ENCODE measurements at regions of chr14 and their contacts with region 1.

Region 1: GRCh38 chr14:22531451-22532344 is 57.3 kb downstream of the DAD1 start:
- DNase-seq: no peak
- H3K4me3 Mint-ChIP-seq: peak overlapping the region; percentile 81
- H3K27ac Mint-ChIP-seq: peak overlapping the region; percentile 94
- H3K4me1 Mint-ChIP-seq: peaks cover 82% of the 10 kb centered on the region
- H3K27me3 Mint-ChIP-seq: no peaks in the 10 kb centered on the region

Region 2: GRCh38 chr14:21723431-21724045 is 808.2 kb before region 1 on chr14:
- intact Hi-C with region 1: loop called (anchors 5 kb)
- DNase-seq: peak; percentile 79
- H3K4me3 Mint-ChIP-seq: peak overlapping the region; percentile 57
- H3K27ac Mint-ChIP-seq: peak overlapping the region; percentile 81
- H3K4me1 Mint-ChIP-seq: peaks cover 4% of the 10 kb centered on the region
- H3K27me3 Mint-ChIP-seq: peaks cover 48% of the 10 kb centered on the region

Region 3: DNA sequence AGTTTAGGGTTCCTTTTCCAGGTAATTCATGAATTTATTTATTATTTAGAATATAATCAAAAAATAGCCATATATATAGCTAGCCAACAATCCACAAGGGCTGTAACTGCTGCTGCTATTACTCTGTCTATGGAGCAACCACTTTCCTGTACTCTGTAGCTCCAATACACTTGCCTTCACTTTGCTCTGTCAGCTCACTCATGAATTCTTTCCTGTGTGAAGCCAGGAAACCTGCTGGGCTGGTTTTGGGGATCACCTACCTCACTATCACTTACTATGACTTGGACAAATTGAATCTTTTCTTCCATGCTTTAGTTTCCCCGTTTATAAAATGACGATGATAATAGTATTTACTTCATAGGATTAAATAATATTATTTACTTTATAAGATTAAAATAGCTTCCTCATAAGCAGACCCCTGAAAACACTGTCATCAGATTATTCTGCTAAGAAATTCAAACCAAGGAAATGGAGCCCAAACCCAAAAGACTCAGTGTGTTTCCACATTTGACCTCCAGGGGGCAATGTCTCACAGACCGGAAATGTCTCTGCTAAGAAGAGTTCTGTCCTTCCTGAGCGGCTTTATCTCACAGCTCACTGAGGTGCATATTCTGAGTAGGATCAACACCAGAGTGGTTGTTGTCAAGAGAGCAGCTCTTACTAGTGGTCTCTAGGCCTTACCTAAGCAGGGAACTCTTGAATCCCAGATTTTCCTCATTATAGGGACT is 399.8 kb before region 1 on chr14:
- intact Hi-C with region 1: no loop called
- DNase-seq: peak; percentile 79
- H3K4me3 Mint-ChIP-seq: no peak overlapping the region
- H3K27ac Mint-ChIP-seq: no peak overlapping the region
- H3K4me1 Mint-ChIP-seq: peaks cover 5% of the 10 kb centered on the region
- H3K27me3 Mint-ChIP-seq: no peaks in the 10 kb centered on the region

Region 4: DNA sequence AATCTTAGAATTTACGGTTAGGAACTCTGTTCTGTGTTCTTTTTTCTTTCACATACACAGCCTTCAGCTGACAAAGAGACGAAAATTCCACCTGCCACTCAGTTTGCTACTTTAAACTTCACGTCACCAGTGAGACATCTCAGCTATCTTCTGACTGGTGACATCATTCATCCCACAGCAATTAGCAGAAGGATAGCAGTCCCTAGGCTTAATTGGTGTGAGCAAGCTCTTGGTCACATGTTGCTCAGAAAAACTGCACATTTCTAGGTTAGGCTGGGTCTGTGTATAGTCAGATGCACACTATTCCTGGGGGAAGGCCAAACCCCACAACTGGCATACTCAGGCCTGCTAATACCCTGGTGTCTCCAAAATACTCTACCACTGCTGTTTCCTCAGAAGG is 259.6 kb after region 1 on chr14:
- intact Hi-C with region 1: no loop called
- DNase-seq: no peak
- H3K4me3 Mint-ChIP-seq: no peak overlapping the region
- H3K27ac Mint-ChIP-seq: no peak overlapping the region
- H3K4me1 Mint-ChIP-seq: peaks cover 2% of the 10 kb centered on the region
- H3K27me3 Mint-ChIP-seq: peaks cover 5% of the 10 kb centered on the region

Measured in activated CD4-positive, alpha-beta T cell treated with anti-CD3 and anti-CD28 coated beads, Interleukin-2, amount 10 ng/mL, durations not matched to agents 24 days and 14 days (primary cell).